Posterior vena cava (tissue), 2 donors: ENCODE measurements at regions of chr1 and their contacts with region 1.

Region 1: DNA sequence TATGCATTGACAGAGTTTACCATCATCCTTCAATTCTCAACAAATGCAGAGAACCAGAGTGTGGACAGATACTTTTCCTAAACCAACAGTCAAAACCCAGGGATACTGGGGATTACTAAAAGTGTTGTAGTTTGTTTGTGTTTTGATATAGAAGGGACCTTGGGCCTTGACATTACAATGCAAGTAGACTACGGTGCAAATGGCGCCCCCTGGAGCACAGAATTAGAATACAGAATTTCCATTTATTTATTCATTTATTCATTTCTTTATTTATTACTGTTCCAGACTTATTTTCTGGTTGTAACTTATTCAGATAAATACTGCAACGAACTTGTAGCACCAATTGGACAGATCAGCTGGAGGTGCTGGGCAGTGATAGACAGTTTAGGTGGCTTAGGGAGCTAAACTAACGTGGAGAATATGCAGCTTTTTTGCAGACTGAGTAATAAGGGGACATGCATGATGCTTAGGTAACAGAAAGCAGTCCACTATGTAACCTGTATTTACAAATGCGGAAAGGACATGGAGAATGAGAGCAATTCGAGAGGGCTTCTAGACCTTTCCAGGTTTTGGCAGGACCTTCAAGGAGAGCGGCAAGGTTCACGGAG is 42.6 kb downstream of the KIRREL1 start:
- DNase-seq: no peak

Region 2: DNA sequence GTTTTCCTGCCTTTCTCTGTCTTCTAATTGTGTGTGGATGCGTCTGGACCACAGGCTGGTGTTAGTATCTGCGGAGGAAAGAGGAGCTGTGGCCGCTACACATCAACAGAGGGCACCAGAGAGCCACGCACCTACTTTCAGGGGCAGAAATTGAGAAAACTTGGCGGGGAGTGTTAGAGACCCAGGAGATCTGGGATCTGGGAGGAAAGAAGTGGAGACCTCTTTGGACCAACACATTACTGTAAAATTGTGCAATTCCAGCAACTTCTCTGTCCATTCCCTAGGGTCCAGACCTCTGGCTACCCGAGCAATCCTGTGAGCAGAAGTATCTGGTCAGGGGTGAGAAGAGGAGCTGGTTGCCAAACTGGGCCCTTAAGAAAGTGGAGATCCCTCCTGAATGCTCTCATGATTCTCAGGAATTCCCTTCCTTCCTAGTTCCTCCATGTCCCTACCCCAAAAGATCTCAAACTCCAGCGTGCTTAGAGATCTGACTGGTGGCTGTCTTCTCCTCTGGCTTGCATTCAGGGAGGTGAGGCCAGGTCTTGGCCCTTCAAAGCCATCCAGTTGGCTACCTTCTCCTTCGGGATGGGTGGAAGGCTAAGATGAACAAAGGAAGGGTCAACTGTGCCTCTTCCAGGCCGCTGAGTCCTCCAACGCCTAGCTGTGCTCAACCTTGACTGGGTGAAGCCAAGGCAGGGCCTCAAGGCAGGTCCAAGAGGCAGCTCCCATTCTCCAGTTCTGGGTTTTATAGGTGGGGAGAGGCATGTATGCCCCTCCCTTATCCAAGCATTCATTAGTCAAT is 43.8 kb before region 1 on chr1:
- intact Hi-C with region 1: loop called (anchors 5 kb)
- DNase-seq: peak; percentile 88

Region 3: DNA sequence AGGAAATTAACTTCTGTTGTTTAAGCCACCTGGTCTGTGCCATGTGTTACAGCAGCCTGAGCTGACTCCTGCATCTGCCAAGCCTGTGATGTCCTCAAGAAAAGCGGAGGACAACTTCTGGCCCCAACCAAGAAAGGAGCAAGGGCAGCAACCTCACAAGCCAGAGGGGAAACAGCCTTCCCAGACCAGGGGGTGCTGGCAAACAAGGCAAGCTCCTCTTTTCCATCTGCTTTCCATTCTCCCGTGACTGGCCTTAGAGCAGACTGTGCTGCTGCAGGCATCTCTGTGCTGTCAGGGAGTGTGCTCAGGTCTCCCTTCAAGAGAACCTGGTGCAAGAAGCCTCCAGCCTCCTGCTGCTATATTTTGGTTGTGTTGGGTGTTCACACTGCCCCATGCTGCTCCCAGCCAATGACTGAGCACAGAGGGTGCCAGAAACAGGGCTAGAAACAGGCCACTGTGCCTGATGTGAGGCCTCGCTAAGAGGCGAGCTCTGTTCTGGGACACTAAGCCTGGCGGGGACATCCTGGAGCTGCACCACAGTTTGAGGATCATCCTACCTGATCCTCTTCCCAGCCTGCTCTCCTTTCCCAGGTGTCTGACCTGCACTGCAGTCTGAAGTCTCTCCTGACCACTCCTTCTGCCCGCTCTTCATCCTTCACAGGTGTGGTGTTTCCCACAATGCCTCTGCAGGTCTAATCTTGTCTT is 1945.4 kb after region 1 on chr1:
- intact Hi-C with region 1: loop called in 1 of 2 experiments (anchors 5 kb)
- DNase-seq: no peak